Activated B cell treated with CpG ODN at 0.5 μM for 24 hours (primary cell): ENCODE measurements at regions of chr2 and their contacts with region 1.

Region 1: GRCh38 chr2:164737612-164738081 is 104.0 kb downstream of the COBLL1 start:
- DNase-seq: peak; percentile 29
- ATAC-seq: peak; percentile 62
- H3K4me3 Mint-ChIP-seq: peak overlapping the region; percentile 21
- H3K27ac Mint-ChIP-seq: peak overlapping the region; percentile 74
- H3K4me1 Mint-ChIP-seq: peaks cover 72% of the 10 kb centered on the region
- H3K27me3 Mint-ChIP-seq: no peaks in the 10 kb centered on the region
- CTCF ChIP-seq: no peak

Region 2: DNA sequence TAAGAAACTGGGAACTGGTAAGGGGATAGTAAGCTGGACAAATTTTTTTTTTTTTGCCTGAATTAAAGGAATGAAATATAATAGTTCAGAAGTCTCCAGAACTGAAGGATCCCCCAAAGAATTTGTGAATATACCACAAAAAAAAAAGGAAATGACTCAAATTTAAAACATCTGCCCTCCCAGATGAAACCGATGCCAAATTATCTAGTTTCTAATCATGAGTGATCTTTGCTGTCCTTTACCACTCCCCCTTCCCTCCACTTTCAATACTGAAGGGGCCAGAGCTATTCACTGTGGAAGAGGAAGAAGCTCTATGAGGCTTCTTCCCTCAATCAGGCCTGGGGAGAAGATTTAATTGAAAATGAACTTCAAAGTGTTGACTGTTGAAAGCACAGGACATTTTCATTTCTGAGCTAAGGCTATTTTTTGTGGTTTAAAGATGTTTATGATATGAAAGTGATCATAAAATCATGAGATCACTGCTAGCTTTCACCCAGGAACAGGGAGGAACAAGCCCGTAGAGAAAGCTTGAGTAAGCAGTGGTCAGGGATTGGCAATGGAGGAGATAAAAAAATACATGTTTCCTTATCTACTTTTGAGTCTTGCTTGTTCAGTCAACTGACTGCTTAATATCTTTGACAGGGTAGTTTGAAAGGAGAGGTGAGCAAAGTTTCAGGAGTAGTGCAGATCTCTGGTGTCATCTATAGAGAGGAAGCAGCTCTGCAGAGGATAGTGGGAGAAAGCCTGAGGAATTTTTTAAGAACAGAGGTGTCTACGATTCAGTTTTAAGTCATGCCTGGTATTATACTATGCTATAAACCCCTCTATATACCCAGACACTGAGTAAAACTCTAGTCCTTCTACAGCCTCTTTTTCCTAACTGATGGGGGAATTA is 592.3 kb before region 1 on chr2:
- CTCF ChIA-PET with region 1: no interaction called
- POLR2A ChIA-PET with region 1: no interaction called
- intact Hi-C with region 1: no loop called
- DNase-seq: no peak
- ATAC-seq: no peak
- H3K4me3 Mint-ChIP-seq: no peak overlapping the region
- H3K27ac Mint-ChIP-seq: no peak overlapping the region
- H3K4me1 Mint-ChIP-seq: no peaks in the 10 kb centered on the region
- H3K27me3 Mint-ChIP-seq: no peaks in the 10 kb centered on the region
- CTCF ChIP-seq: no peak

Region 3: DNA sequence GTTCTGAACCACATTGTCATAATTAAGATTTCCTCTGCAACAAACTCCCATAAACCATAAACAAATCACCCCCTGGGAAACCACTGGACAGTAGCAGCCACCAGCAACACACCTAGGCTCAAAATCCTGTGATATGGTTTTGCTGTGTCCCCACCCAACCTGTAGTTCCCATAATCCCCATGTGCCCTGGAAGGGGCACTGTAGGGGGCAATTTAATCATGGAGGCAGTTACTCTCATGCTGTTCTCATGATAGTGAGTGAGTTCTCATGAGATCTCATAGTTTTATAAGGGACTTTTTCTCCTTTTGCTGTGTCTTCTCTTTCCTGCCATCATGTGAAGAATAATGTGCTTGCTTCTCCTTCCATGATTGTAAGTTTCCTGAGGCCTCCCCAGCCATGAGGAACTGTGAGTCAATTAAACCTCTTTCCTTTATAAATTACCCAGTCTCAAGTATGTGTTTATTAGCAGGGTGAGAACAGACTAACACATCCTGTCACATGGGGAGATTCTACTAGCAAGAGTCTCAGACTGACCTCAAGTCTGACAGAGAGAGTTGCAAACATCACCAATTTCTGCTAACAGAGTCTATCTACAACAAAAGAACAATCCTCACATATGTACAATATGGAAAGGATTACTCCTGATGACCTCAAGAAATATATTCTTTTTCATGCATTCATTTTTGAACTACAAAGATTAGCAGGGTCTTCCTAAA is 299.0 kb before region 1 on chr2:
- CTCF ChIA-PET with region 1: no interaction called
- POLR2A ChIA-PET with region 1: no interaction called
- intact Hi-C with region 1: no loop called
- DNase-seq: no peak
- ATAC-seq: no peak
- H3K4me3 Mint-ChIP-seq: no peak overlapping the region
- H3K27ac Mint-ChIP-seq: no peak overlapping the region
- H3K4me1 Mint-ChIP-seq: no peaks in the 10 kb centered on the region
- H3K27me3 Mint-ChIP-seq: no peaks in the 10 kb centered on the region
- CTCF ChIP-seq: no peak

Region 4: GRCh38 chr2:164479460-164479859 is 258.2 kb before region 1 on chr2:
- CTCF ChIA-PET with region 1: no interaction called
- POLR2A ChIA-PET with region 1: no interaction called
- intact Hi-C with region 1: no loop called
- DNase-seq: no peak
- ATAC-seq: no peak
- H3K4me3 Mint-ChIP-seq: no peak overlapping the region
- H3K27ac Mint-ChIP-seq: no peak overlapping the region
- H3K4me1 Mint-ChIP-seq: no peaks in the 10 kb centered on the region
- H3K27me3 Mint-ChIP-seq: no peaks in the 10 kb centered on the region
- CTCF ChIP-seq: no peak

Region 5: DNA sequence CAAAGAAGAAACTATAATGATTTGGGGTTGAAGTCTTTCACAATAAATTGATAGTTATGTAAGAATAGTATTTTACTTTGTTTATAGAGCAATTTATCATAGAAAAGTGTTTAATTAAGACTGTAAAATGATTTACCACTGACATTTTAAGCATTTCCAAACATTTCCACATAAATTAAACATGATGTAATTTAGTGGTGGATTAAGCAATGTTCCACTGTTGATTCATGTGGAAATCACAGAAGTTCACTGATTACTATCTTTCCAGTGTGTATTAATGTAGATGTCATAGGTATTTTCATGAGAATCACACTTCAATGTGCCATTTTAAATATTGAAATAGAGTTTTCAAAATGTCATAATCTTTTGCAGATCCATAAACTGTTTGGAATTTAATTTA is 76.3 kb before region 1 on chr2:
- CTCF ChIA-PET with region 1: no interaction called
- POLR2A ChIA-PET with region 1: no interaction called
- intact Hi-C with region 1: no loop called
- DNase-seq: no peak
- ATAC-seq: no peak
- H3K4me3 Mint-ChIP-seq: no peak overlapping the region
- H3K27ac Mint-ChIP-seq: no peak overlapping the region
- H3K4me1 Mint-ChIP-seq: no peaks in the 10 kb centered on the region
- H3K27me3 Mint-ChIP-seq: no peaks in the 10 kb centered on the region
- CTCF ChIP-seq: no peak

Region 6: GRCh38 chr2:164757924-164758695 is 20.5 kb after region 1 on chr2:
- CTCF ChIA-PET with region 1: interaction called, 6 read pairs
- POLR2A ChIA-PET with region 1: interaction called, 52 read pairs
- intact Hi-C with region 1: loop called (anchors 1 kb)
- DNase-seq: no peak
- ATAC-seq: no peak
- H3K4me3 Mint-ChIP-seq: peak overlapping the region; percentile 73
- H3K27ac Mint-ChIP-seq: peak overlapping the region; percentile 72
- H3K4me1 Mint-ChIP-seq: peaks cover 80% of the 10 kb centered on the region
- H3K27me3 Mint-ChIP-seq: no peaks in the 10 kb centered on the region
- CTCF ChIP-seq: no peak

Region 7: GRCh38 chr2:164868563-164869419 is 131.1 kb after region 1 on chr2:
- CTCF ChIA-PET with region 1: interaction called, 3 read pairs
- POLR2A ChIA-PET with region 1: no interaction called
- intact Hi-C with region 1: loop called (anchors 1 kb)
- DNase-seq: no peak
- ATAC-seq: no peak
- H3K4me3 Mint-ChIP-seq: no peak overlapping the region
- H3K27ac Mint-ChIP-seq: peak overlapping the region; percentile 32
- H3K4me1 Mint-ChIP-seq: peaks cover 41% of the 10 kb centered on the region
- H3K27me3 Mint-ChIP-seq: no peaks in the 10 kb centered on the region
- CTCF ChIP-seq: no peak

Region 8: GRCh38 chr2:164992818-164993217 is 255.2 kb after region 1 on chr2:
- CTCF ChIA-PET with region 1: interaction called, 3 read pairs
- POLR2A ChIA-PET with region 1: no interaction called
- intact Hi-C with region 1: loop called (anchors 1 kb)
- DNase-seq: no peak
- ATAC-seq: peak; percentile 58
- H3K4me3 Mint-ChIP-seq: no peak overlapping the region
- H3K27ac Mint-ChIP-seq: peak overlapping the region; percentile 83
- H3K4me1 Mint-ChIP-seq: peaks cover 46% of the 10 kb centered on the region
- H3K27me3 Mint-ChIP-seq: no peaks in the 10 kb centered on the region
- CTCF ChIP-seq: no peak

Region 9: GRCh38 chr2:165293440-165294353 is 556.0 kb after region 1 on chr2:
- CTCF ChIA-PET with region 1: no interaction called
- POLR2A ChIA-PET with region 1: no interaction called
- intact Hi-C with region 1: loop called (anchors 1 kb)
- DNase-seq: no peak
- ATAC-seq: peak; percentile 100
- H3K4me3 Mint-ChIP-seq: no peak overlapping the region
- H3K27ac Mint-ChIP-seq: no peak overlapping the region
- H3K4me1 Mint-ChIP-seq: peaks cover 4% of the 10 kb centered on the region
- H3K27me3 Mint-ChIP-seq: peaks cover 7% of the 10 kb centered on the region
- CTCF ChIP-seq: no peak